ENCODE measurements at regions of chr18 and their contacts with region 1.

Region 1: DNA sequence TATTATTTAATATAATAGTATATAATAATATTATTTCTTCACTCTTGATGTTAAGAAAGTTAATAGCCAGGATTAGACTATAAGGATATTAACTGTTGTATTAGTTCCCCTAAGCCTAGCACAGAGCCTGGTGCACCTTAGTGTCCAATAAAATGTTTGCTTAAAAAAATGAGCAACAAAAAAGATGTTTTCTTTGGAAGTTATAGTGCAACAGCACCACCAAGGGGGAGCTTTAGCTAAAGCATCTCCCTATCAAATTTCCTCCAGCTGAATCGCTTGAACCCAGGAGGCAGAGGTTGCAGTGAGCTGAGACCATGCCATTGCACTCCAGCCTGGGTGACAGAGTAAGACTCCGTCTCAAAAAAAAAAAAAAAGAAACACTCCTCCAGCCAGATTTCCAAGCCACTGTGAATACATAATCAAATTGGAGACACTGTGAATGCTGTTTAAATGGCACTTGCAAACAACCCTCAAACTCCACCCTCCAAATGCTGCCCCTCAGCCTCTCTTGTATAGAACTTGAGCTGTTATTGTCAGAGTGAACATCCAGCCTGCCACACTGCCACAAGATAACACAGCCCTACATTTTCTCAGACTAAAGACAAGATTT is 221.9 kb downstream of the DYM start:
- DNase-seq: no peak
- H3K4me3 ChIP-seq: no peak overlapping the region
- H3K27ac ChIP-seq: no peak overlapping the region
- H3K4me1 ChIP-seq: no peaks in the 10 kb centered on the region
- H3K27me3 ChIP-seq: no peaks in the 10 kb centered on the region
- CTCF ChIP-seq: peak in 2 of 3 experiments; percentile 52 to 56; a peak in 2 of 4 replicates
- EP300 ChIP-seq: no peak
- POLR2A ChIP-seq: no peak
- RAD21 ChIP-seq: peak; percentile 71 to 74

Region 2: GRCh38 chr18:48675352-48675761 is 563.2 kb before region 1 on chr18:
- CTCF ChIA-PET with region 1: interaction called, 13 read pairs
- POLR2A ChIA-PET with region 1: no interaction called
- DNase-seq: peak; percentile 72 to 97
- H3K4me3 ChIP-seq: no peak overlapping the region
- H3K27ac ChIP-seq: no peak overlapping the region
- H3K4me1 ChIP-seq: peaks cover 0 to 3% (median under 1%) of the 10 kb centered on the region in 4 experiments; a peak in 2 of 7 replicates
- H3K27me3 ChIP-seq: no peaks in the 10 kb centered on the region
- CTCF ChIP-seq: peak; percentile 94 to 97 (median 96)
- EP300 ChIP-seq: no peak
- POLR2A ChIP-seq: no peak
- RAD21 ChIP-seq: peak; percentile 94 to 97

Region 3: DNA sequence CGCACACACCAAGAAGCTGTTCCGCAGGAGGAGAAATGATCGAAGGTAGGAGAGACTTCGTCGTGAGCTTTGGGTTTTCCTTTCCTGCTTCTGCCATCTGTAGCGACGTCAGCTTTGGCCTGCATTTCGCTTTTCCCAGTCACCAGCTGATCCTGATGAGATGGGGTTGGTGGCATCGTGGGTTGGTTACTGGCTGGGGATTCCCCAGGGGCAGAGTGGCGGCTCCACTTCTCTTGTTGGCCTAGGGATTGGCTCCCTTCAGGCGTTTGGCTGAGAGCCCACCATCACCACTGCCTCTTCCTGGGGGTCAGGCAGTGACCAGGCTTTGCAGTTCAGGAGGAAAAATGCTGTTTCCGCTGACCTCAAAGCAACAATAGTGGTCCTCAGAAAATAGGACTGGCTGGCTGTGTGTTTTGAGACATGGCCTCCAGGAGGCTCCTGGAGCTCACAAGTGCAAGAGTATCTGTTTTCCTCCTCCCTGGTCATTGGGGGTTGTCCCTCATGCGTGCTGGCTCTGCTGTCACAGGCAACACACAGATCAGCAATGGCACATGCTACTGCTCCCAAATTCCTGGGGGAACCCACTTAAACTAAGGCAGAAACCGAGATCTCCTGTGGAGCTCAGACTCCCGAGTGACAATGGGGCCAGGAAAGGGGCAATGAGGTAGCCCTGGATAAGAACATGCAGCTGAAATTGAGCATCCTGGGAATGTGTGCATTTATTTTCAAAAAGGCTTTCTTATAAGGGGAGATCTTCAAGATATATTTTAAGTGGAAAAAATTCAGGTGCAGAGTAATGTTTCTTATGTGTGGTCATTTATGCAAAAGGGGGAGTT is 526.7 kb before region 1 on chr18:
- CTCF ChIA-PET with region 1: interaction called, 10 read pairs
- POLR2A ChIA-PET with region 1: no interaction called
- DNase-seq: no peak
- H3K4me3 ChIP-seq: no peak overlapping the region
- H3K27ac ChIP-seq: no peak overlapping the region
- H3K4me1 ChIP-seq: peaks cover 0 to 10% (median 5%) of the 10 kb centered on the region in 4 experiments; a peak in 3 of 7 replicates
- H3K27me3 ChIP-seq: no peaks in the 10 kb centered on the region
- CTCF ChIP-seq: peak; percentile 39 to 78 (median 58)
- EP300 ChIP-seq: no peak
- POLR2A ChIP-seq: no peak
- RAD21 ChIP-seq: peak; percentile 86 to 87

Region 4: GRCh38 chr18:48777026-48777743 is 461.4 kb before region 1 on chr18:
- CTCF ChIA-PET with region 1: interaction called, 12 read pairs
- POLR2A ChIA-PET with region 1: no interaction called
- DNase-seq: peak; percentile 41 to 87
- H3K4me3 ChIP-seq: no peak overlapping the region
- H3K27ac ChIP-seq: no peak overlapping the region
- H3K4me1 ChIP-seq: peaks cover 0 to 5% (median 2%) of the 10 kb centered on the region in 4 experiments; a peak in 4 of 7 replicates
- H3K27me3 ChIP-seq: no peaks in the 10 kb centered on the region
- CTCF ChIP-seq: peak; percentile 87 to 98 (median 90)
- EP300 ChIP-seq: no peak
- POLR2A ChIP-seq: no peak
- RAD21 ChIP-seq: peak; percentile 88 to 92

Region 5: DNA sequence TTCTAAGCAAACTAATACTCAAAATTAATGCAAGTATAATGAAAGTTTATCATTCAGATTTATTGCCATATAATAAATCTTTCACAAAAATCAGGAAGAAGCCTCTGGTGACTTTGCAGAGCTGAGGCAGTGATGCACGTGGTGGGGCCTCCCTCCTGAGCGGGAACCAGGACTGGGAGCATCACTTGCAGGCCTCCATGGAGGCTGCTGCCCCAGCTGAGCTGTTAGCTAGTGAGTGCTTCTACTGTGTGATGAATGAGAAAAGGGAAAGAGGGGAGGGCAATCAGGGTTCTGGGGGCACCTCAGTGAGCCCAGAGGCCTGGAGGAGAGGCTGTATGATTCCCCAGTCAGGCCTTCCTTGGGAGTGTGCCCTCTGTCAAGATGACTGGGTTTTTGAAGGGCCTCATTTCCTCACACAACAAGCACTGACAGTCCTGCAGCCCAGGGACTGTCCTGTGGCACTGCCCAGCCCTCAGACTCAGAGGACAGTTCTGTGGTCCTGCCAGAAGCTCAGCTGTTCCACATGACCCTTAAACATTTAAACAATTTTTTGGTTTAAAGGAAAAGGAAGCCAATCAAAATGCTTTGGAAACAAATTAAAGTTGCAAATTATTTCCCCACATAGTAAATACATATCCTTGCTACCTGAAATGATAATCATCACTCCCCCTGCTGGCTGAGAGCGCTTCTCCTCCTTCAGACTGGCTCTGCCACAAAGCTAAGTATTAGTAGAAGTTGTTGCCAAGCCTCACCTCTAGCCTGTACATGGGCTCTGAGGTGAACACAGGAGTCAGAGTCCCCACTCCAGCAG is 196.9 kb before region 1 on chr18:
- CTCF ChIA-PET with region 1: interaction called, 18 read pairs
- POLR2A ChIA-PET with region 1: no interaction called
- DNase-seq: no peak
- H3K4me3 ChIP-seq: no peak overlapping the region
- H3K27ac ChIP-seq: no peak overlapping the region
- H3K4me1 ChIP-seq: peaks cover 5 to 16% (median 8%) of the 10 kb centered on the region in 4 experiments
- H3K27me3 ChIP-seq: no peaks in the 10 kb centered on the region; a peak in 1 of 7 replicates
- CTCF ChIP-seq: peak; percentile 30 to 76 (median 58)
- EP300 ChIP-seq: no peak
- POLR2A ChIP-seq: no peak
- RAD21 ChIP-seq: peak; percentile 53 to 69

Region 6: GRCh38 chr18:49149011-49149410 is 89.5 kb before region 1 on chr18:
- CTCF ChIA-PET with region 1: no interaction called
- POLR2A ChIA-PET with region 1: no interaction called
- DNase-seq: no peak
- H3K4me3 ChIP-seq: no peak overlapping the region
- H3K27ac ChIP-seq: no peak overlapping the region
- H3K4me1 ChIP-seq: no peaks in the 10 kb centered on the region
- H3K27me3 ChIP-seq: no peaks in the 10 kb centered on the region
- CTCF ChIP-seq: no peak
- EP300 ChIP-seq: no peak
- POLR2A ChIP-seq: no peak
- RAD21 ChIP-seq: no peak

Region 7: GRCh38 chr18:49189772-49190171 is 48.8 kb before region 1 on chr18:
- CTCF ChIA-PET with region 1: no interaction called
- POLR2A ChIA-PET with region 1: no interaction called
- DNase-seq: no peak
- H3K4me3 ChIP-seq: no peak overlapping the region
- H3K27ac ChIP-seq: no peak overlapping the region
- H3K4me1 ChIP-seq: no peaks in the 10 kb centered on the region
- H3K27me3 ChIP-seq: no peaks in the 10 kb centered on the region
- CTCF ChIP-seq: no peak
- EP300 ChIP-seq: no peak
- POLR2A ChIP-seq: no peak
- RAD21 ChIP-seq: no peak

Region 8: GRCh38 chr18:49250816-49251388 is 12.4 kb after region 1 on chr18:
- CTCF ChIA-PET with region 1: interaction called, 10 read pairs
- POLR2A ChIA-PET with region 1: no interaction called
- DNase-seq: no peak
- H3K4me3 ChIP-seq: no peak overlapping the region
- H3K27ac ChIP-seq: no peak overlapping the region
- H3K4me1 ChIP-seq: no peaks in the 10 kb centered on the region
- H3K27me3 ChIP-seq: no peaks in the 10 kb centered on the region
- CTCF ChIP-seq: peak in 2 of 3 experiments; percentile 62 to 66; a peak in 3 of 4 replicates
- EP300 ChIP-seq: no peak
- POLR2A ChIP-seq: no peak
- RAD21 ChIP-seq: peak; percentile 70 to 77

Region 9: GRCh38 chr18:49447810-49448745 is 209.5 kb after region 1 on chr18:
- CTCF ChIA-PET with region 1: interaction called, 16 read pairs
- POLR2A ChIA-PET with region 1: no interaction called
- DNase-seq: no peak
- H3K4me3 ChIP-seq: no peak overlapping the region
- H3K27ac ChIP-seq: no peak overlapping the region
- H3K4me1 ChIP-seq: no peaks in the 10 kb centered on the region
- H3K27me3 ChIP-seq: no peaks in the 10 kb centered on the region
- CTCF ChIP-seq: peak in 2 of 3 experiments; percentile 76 to 85; a peak in 3 of 4 replicates
- EP300 ChIP-seq: no peak
- POLR2A ChIP-seq: no peak
- RAD21 ChIP-seq: peak; percentile 92 to 93

Measured in H1 (cell line).